GM10248 (cell line): ENCODE measurements at regions of chr15 and their contacts with region 1.

Region 1: DNA sequence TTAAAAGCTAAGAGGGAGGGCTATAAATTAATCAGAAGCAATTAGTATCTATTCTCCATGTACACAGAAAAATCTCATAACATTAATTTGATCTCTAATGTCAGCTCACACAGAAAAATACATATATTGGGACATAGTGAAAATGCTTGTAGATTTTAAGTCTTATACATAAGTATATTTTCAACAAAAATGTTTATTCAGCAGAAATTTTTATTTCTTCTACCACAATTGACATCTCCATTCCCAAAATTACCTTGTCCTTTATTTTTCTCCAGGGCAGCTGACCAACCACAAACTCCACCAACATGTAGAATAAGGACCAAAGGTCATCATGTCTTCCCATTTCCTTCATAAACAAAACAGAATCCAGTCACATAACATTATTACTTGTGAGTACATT is 74.5 kb upstream of the CDAN1 start:
- DNase-seq: no peak
- CTCF ChIP-seq: no peak

Region 2: DNA sequence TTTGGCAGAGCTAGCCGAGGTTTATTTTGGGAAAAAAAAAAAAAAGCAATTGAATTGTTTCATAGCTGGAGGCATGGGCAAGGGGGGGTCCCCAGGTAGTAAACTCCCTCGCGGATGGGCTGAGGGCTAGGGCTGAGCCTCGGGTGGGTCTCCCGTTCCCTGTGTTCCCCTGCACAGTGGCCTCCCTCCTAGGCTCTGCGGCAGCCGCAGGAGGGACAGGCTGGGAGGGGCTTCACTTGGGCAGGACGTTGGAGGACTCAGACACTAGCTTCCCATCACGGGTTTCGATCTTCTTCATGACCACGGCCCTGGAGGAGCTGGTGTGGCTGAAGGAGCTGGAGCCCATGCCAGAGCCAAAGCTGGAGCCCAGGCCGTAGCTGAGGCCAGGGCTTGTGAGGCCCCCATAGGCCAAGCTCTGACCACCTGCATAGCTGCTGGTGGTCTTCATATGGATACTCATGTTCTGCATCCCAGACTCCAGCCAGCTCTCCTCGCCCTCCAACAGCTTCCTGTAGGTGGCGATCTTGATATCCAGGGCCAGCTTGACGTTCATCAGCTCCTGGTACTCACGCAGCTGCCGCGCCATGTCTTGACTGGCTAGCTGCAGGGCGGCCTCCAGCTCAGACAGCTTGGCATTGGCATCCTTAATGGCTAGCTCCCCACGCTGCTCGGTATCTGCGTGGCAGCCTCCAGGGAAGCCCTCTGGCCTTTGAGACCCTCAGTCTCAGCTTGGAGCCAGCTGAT is 10.5 kb before region 1 on chr15:
- CTCF ChIA-PET with region 1: interaction called, 10 read pairs
- POLR2A ChIA-PET with region 1: no interaction called
- DNase-seq: no peak
- CTCF ChIP-seq: peak; percentile 27